ENCODE measurements at regions of chr12 and their contacts with region 1.

Region 1: DNA sequence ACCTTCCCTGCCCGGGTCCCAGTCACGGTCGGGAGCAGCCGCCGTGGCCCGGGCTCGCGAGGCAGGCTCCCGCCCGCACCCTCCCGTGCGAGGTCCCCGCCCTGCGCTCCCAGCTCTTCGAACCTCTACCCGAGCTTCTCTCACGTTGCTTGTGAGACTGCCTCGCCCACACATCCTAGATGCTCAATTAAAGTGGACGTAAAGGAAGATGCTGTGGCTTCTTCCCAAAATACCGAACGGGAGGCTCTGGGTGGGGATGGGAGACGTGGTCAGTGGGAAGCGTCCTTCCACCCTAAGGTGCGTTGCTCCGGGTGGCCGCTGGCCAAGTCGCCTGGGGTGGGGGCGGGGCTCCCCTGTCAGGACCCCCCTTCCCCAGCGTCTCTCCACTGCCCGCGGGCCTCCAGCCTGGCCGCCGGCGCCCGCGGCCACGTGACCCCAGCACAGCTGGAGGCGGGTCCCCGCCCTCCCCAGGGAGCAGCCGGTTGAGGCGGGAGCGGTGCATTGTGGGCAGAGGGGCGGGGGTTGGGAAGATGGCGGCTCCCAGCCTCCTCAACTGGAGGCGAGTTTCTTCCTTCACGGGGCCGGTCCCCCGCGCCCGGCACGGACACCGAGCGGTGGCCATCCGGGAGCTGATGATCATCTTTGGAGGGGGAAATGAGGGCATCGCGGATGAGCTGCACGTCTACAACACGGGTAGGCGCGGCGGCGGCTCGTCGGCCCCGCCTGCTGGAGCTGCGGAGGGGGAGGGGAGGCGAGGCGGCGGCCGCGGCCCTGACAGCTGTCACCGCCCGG is at the start of gene HCFC2:
- DNase-seq: peak; percentile 94

Region 2: GRCh38 chr12:104049903-104050356 is 14.3 kb before region 1 on chr12 and contains the start of gene GLT8D2:
- CTCF ChIA-PET with region 1: no interaction called
- POLR2A ChIA-PET with region 1: interaction called, 12 read pairs
- DNase-seq: peak; percentile 65